CD8-positive, alpha-beta T cell (primary cell): ENCODE measurements at regions of chr2 and their contacts with region 1.

Region 1: DNA sequence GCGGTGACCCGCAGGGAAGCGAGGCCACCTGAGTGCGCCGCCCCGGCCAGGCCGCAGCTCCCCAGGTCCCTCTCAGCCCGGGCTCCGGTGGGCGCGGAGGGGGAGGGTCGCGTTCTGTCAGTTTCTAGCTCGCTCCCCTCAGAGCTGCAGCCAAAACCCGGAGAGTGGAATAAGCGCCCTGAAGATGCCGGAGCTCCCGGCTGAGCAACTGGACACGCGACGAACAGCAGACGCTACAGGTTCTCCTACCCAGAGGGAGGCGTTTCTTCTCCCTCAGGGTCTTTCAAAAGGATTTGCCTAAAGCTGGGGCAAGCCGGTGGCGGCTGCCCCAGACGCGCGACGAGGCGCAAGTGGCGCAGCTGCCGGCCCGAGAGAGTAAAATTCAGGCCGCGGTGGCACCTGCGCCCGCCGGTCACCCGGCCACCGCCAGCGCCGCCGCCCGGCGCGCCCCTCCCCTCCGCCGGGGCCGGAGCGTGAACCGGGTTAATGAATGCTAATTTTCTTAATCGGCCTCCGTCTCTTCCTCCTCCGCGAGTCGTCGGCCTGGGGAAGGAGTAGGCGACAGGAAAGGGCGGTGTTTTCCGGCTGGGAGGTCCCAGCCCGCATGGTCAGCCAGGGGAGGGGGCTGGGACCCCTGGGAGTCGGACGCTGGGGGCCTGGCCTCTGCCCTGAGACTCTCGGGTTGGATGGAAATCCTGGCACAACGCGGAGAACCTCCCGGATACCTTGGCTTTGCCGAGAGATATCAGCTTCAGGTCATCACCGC is 845 bp upstream of the CDC42EP3 start:
- DNase-seq: peak; percentile 42 to 84 (median 70)
- ATAC-seq: peak; percentile 47
- H3K4me3 ChIP-seq: peak overlapping the region; percentile 83 to 99
- H3K4me3 Mint-ChIP-seq: peak overlapping the region; percentile 93
- H3K27ac ChIP-seq: peak overlapping the region; percentile 56 to 72
- H3K27ac Mint-ChIP-seq: peak overlapping the region; percentile 90
- H3K4me1 ChIP-seq: peaks cover 29% of the 10 kb centered on the region
- H3K4me1 Mint-ChIP-seq: peaks cover 39% of the 10 kb centered on the region
- H3K27me3 ChIP-seq: no peaks in the 10 kb centered on the region
- H3K27me3 Mint-ChIP-seq: no peaks in the 10 kb centered on the region
- CTCF ChIP-seq: no peak

Region 2: DNA sequence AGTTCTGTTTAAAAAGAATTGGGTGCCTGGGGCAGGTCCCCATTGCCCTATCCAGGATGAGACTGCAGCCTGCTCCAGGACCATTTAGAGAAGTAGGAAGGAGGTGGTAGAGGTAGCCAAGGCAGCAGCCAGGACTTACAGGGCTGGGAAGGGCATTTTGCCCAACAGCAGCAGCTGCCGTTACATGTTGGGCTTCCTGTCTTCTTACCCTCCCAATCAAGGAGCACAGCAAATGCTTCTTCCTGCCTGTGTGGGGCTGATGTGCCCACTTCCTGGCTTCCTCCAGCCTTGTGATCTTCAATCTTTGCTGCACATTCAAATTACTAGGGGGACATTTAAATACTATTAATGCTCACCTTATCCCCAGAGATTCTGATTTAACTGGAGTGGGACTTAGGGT is 215.8 kb before region 1 on chr2:
- CTCF ChIA-PET with region 1: no interaction called
- POLR2A ChIA-PET with region 1: interaction called, 4 read pairs
- intact Hi-C with region 1: loop called in 1 of 2 experiments (anchors 10 kb)
- DNase-seq: peak in 8 of 9 experiments; percentile 19 to 73 (median 48)
- ATAC-seq: peak; percentile 80
- H3K4me3 ChIP-seq: peak overlapping the region in 1 of 2 experiments; percentile 28
- H3K4me3 Mint-ChIP-seq: peak overlapping the region; percentile 55
- H3K27ac ChIP-seq: peak overlapping the region in 1 of 2 experiments; percentile 64
- H3K27ac Mint-ChIP-seq: peak overlapping the region; percentile 79
- H3K4me1 ChIP-seq: peaks cover 56% of the 10 kb centered on the region
- H3K4me1 Mint-ChIP-seq: peaks cover 82% of the 10 kb centered on the region
- H3K27me3 ChIP-seq: no peaks in the 10 kb centered on the region
- H3K27me3 Mint-ChIP-seq: no peaks in the 10 kb centered on the region
- CTCF ChIP-seq: no peak

Region 3: DNA sequence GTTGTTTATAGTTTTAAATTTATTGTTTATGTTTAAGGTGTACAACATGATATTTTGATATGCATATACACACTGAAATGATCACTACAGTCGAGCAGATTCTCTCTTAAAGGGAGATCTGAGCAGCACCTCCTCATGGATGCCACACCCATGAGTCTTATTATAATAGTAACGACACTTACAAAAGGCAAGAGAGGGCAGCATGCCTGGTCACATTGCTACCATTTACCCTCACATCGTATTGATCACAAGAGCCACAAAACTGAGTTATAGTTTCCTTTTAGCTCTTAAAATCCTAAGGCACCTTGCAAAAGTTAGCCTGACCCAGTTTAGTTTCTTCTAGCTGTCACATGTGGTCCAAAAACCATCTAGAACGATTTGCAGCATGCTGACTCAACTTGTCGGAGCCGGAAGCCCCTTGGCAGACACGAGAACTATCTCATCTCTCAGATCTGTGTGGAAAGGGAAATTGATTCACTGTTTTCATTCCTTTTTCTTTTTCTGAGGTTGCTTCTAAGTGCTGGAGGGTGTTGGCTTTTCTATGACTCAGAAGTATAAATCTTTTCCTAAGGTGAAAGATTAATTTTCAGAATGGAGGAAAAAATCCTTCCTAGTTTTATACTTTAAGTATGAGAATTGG is 86.2 kb before region 1 on chr2:
- CTCF ChIA-PET with region 1: interaction called, 4 read pairs
- POLR2A ChIA-PET with region 1: interaction called, 10 read pairs
- intact Hi-C with region 1: loop called in 1 of 2 experiments (anchors 2 kb)
- DNase-seq: peak; percentile 37 to 91 (median 75)
- ATAC-seq: peak; percentile 85
- H3K4me3 ChIP-seq: no peak overlapping the region
- H3K4me3 Mint-ChIP-seq: peak overlapping the region; percentile 42
- H3K27ac ChIP-seq: peak overlapping the region; percentile 2 to 83
- H3K27ac Mint-ChIP-seq: peak overlapping the region; percentile 88
- H3K4me1 ChIP-seq: peaks cover 61% of the 10 kb centered on the region
- H3K4me1 Mint-ChIP-seq: peaks cover 87% of the 10 kb centered on the region
- H3K27me3 ChIP-seq: no peaks in the 10 kb centered on the region
- H3K27me3 Mint-ChIP-seq: no peaks in the 10 kb centered on the region
- CTCF ChIP-seq: no peak

Region 4: GRCh38 chr2:37635504-37636380 is 36.5 kb before region 1 on chr2:
- CTCF ChIA-PET with region 1: no interaction called
- POLR2A ChIA-PET with region 1: interaction called, 4 read pairs
- intact Hi-C with region 1: loop called (anchors 1 to 5 kb)
- DNase-seq: peak; percentile 29 to 94 (median 68)
- ATAC-seq: peak; percentile 82
- H3K4me3 ChIP-seq: peak overlapping the region in 1 of 2 experiments; percentile 21
- H3K4me3 Mint-ChIP-seq: peak overlapping the region; percentile 32
- H3K27ac ChIP-seq: peak overlapping the region; percentile 50 to 92
- H3K27ac Mint-ChIP-seq: peak overlapping the region; percentile 92
- H3K4me1 ChIP-seq: peaks cover 41% of the 10 kb centered on the region
- H3K4me1 Mint-ChIP-seq: peaks cover 80% of the 10 kb centered on the region
- H3K27me3 ChIP-seq: no peaks in the 10 kb centered on the region
- H3K27me3 Mint-ChIP-seq: no peaks in the 10 kb centered on the region
- CTCF ChIP-seq: no peak

Region 5: DNA sequence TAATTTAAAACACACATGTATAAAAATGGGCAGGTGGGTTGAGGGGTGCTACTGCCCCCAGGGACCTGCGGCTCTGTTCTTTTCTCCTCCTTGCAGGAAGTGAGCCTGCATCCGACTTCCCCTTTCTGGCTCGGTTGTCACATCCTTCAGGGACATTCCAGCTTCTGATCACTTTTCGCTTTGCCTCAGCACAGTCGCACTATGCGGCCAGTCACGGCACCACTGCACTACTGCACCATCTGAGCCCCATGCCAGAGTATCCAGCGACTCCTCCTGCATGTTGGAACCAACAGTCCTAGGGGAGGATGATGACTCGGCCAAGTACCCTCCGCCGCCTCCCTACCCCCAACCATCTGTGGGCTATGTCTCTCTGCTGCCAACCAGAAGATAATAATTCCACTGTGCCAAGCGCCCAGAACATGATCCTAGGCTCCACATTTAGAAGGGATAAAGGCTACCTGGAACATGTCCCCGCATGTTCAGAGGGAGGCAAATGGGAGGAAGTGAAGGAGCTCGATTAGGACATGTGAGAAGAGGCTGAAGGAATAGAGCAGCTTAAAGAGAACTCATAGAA is 18.4 kb before region 1 on chr2:
- CTCF ChIA-PET with region 1: interaction called, 10 read pairs
- POLR2A ChIA-PET with region 1: interaction called, 13 read pairs
- intact Hi-C with region 1: loop called (anchors 1 to 2 kb)
- DNase-seq: peak in 2 of 9 experiments; percentile 53 to 68
- ATAC-seq: no peak
- H3K4me3 ChIP-seq: no peak overlapping the region
- H3K4me3 Mint-ChIP-seq: peak overlapping the region; percentile 53
- H3K27ac ChIP-seq: peak overlapping the region in 1 of 2 experiments; percentile 62
- H3K27ac Mint-ChIP-seq: peak overlapping the region; percentile 95
- H3K4me1 ChIP-seq: peaks cover 85% of the 10 kb centered on the region
- H3K4me1 Mint-ChIP-seq: peaks cover 93% of the 10 kb centered on the region
- H3K27me3 ChIP-seq: no peaks in the 10 kb centered on the region
- H3K27me3 Mint-ChIP-seq: no peaks in the 10 kb centered on the region
- CTCF ChIP-seq: no peak

Region 6: GRCh38 chr2:37832590-37833197 is 160.4 kb after region 1 on chr2:
- CTCF ChIA-PET with region 1: interaction called, 4 read pairs
- POLR2A ChIA-PET with region 1: interaction called, 3 read pairs
- intact Hi-C with region 1: loop called in 1 of 2 experiments (anchors 5 kb)
- DNase-seq: peak; percentile 62 to 91 (median 84)
- ATAC-seq: peak; percentile 78
- H3K4me3 ChIP-seq: no peak overlapping the region
- H3K4me3 Mint-ChIP-seq: no peak overlapping the region
- H3K27ac ChIP-seq: no peak overlapping the region
- H3K27ac Mint-ChIP-seq: no peak overlapping the region
- H3K4me1 ChIP-seq: no peaks in the 10 kb centered on the region
- H3K4me1 Mint-ChIP-seq: peaks cover 5% of the 10 kb centered on the region
- H3K27me3 ChIP-seq: no peaks in the 10 kb centered on the region
- H3K27me3 Mint-ChIP-seq: no peaks in the 10 kb centered on the region
- CTCF ChIP-seq: peak; percentile 90